ENCODE measurements at regions of chr5 and their contacts with region 1.

Region 1: GRCh38 chr5:137498736-137499505 is at the start of gene SPOCK1:
- DNase-seq: peak; percentile 37
- ATAC-seq: peak; percentile 54
- H3K4me3 Mint-ChIP-seq: no peak within 1 kb of the TSS
- H3K27ac Mint-ChIP-seq: no peak within 1 kb of the TSS
- H3K4me1 Mint-ChIP-seq: no peaks in the 10 kb centered on the region
- H3K27me3 Mint-ChIP-seq: peaks cover 18% of the 10 kb centered on the region
- CTCF ChIP-seq: no peak
- total RNA-seq, gene SPOCK1: not detected in 2 replicates

Region 2: DNA sequence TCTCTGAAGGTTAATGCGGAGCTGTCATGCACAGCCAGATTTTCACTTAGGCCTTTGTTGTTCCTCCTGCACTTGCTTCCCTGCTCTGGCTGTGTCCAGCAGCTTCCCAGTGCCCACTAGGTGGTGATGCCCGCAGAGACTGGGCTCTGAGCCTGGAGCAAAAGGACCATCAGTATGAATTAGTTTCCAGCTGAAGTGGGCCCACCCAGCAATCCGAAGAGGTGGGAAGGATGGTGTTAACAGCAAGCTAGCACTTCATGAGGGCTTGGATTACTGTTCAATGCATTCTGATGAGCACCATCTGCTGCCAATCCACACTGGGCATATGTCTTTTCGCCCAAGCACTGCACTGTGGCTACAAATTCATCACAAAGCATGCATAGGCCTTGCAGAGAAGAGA is 458.9 kb before region 1 on chr5:
- CTCF ChIA-PET with region 1: no interaction called
- POLR2A ChIA-PET with region 1: no interaction called
- intact Hi-C with region 1: no loop called
- DNase-seq: no peak
- ATAC-seq: no peak
- H3K4me3 Mint-ChIP-seq: no peak overlapping the region
- H3K27ac Mint-ChIP-seq: no peak overlapping the region
- H3K4me1 Mint-ChIP-seq: no peaks in the 10 kb centered on the region
- H3K27me3 Mint-ChIP-seq: no peaks in the 10 kb centered on the region
- CTCF ChIP-seq: no peak

Region 3: GRCh38 chr5:137320056-137321045 is 178.6 kb before region 1 on chr5:
- CTCF ChIA-PET with region 1: interaction called, 15 read pairs
- POLR2A ChIA-PET with region 1: no interaction called
- intact Hi-C with region 1: no loop called
- DNase-seq: no peak
- ATAC-seq: no peak
- H3K4me3 Mint-ChIP-seq: no peak overlapping the region
- H3K27ac Mint-ChIP-seq: no peak overlapping the region
- H3K4me1 Mint-ChIP-seq: no peaks in the 10 kb centered on the region
- H3K27me3 Mint-ChIP-seq: peaks cover 11% of the 10 kb centered on the region
- CTCF ChIP-seq: no peak

Region 4: GRCh38 chr5:137531266-137531665 is 32.3 kb after region 1 on chr5:
- CTCF ChIA-PET with region 1: no interaction called
- POLR2A ChIA-PET with region 1: no interaction called
- intact Hi-C with region 1: no loop called
- DNase-seq: no peak
- ATAC-seq: no peak
- H3K4me3 Mint-ChIP-seq: no peak overlapping the region
- H3K27ac Mint-ChIP-seq: no peak overlapping the region
- H3K4me1 Mint-ChIP-seq: no peaks in the 10 kb centered on the region
- H3K27me3 Mint-ChIP-seq: peaks cover 2% of the 10 kb centered on the region
- CTCF ChIP-seq: no peak

Measured in activated B cell treated with CpG ODN at 0.5 μM for 24 hours (primary cell).